CD8-positive, alpha-beta memory T cell (primary cell): ENCODE measurements at regions of chr6 and their contacts with region 1.

Region 1: DNA sequence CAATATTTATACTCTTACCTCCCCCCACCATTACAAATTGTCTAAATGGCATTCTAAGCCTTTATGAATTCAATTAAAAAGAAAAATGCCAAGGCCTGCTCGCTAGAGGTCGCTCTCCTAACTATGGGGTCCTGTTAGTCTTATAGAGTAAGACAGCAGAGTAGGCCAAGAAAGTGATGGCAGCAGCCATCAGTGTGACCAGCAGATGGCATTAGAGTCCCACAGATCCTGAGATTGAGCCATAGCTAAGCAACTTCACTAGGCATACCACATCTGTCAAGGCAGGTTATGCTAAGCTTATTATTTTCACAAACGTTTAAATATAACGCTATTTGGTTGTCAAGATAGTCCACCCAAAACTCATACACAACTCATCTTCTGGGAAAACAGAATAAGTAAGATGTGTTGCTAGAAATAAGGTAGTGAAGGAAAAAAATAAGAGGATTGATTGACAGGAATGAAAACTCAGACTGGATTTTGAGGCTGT is 57.6 kb upstream of the SCAF8 start:
- DNase-seq: peak; percentile 70 to 88 (median 81)
- H3K4me3 ChIP-seq: no peak overlapping the region
- H3K4me3 Mint-ChIP-seq: no peak overlapping the region
- H3K27ac ChIP-seq: no peak overlapping the region
- H3K27ac Mint-ChIP-seq: no peak overlapping the region
- H3K4me1 ChIP-seq: no peaks in the 10 kb centered on the region
- H3K4me1 Mint-ChIP-seq: no peaks in the 10 kb centered on the region
- H3K27me3 ChIP-seq: no peaks in the 10 kb centered on the region
- H3K27me3 Mint-ChIP-seq: no peaks in the 10 kb centered on the region

Region 2: DNA sequence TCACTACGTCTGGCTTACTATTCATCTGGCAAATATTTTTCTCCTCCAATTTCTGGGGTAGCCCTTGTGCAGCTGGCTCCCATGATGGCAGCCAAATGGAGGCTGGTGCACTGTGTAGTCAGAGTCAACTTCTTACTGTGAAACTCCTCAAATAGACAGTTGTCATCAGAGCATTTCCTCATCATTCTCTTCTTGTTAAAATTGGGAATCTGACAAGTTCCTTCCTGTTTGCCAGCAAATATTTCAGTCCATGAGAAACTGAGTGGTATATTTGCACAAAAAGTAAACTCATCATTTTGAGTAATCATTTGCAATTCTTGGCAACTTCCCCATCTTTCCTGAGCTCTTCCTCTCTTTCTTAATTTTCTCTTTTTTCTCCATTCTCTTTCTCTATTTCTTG is 1149.6 kb before region 1 on chr6:
- CTCF ChIA-PET with region 1: no interaction called
- POLR2A ChIA-PET with region 1: no interaction called
- DNase-seq: no peak
- H3K4me3 ChIP-seq: no peak overlapping the region
- H3K4me3 Mint-ChIP-seq: no peak overlapping the region
- H3K27ac ChIP-seq: no peak overlapping the region
- H3K27ac Mint-ChIP-seq: no peak overlapping the region
- H3K4me1 ChIP-seq: no peaks in the 10 kb centered on the region
- H3K4me1 Mint-ChIP-seq: no peaks in the 10 kb centered on the region
- H3K27me3 ChIP-seq: no peaks in the 10 kb centered on the region
- H3K27me3 Mint-ChIP-seq: no peaks in the 10 kb centered on the region

Region 3: GRCh38 chr6:154593122-154593521 is 82.5 kb before region 1 on chr6:
- CTCF ChIA-PET with region 1: no interaction called
- POLR2A ChIA-PET with region 1: no interaction called
- DNase-seq: no peak
- H3K4me3 ChIP-seq: no peak overlapping the region
- H3K4me3 Mint-ChIP-seq: no peak overlapping the region
- H3K27ac ChIP-seq: peak overlapping the region; percentile 31
- H3K27ac Mint-ChIP-seq: no peak overlapping the region
- H3K4me1 ChIP-seq: no peaks in the 10 kb centered on the region
- H3K4me1 Mint-ChIP-seq: no peaks in the 10 kb centered on the region
- H3K27me3 ChIP-seq: no peaks in the 10 kb centered on the region
- H3K27me3 Mint-ChIP-seq: peaks cover 0 to 3% of the 10 kb centered on the region in 2 donors

Region 4: GRCh38 chr6:154805288-154805911 is 129.8 kb after region 1 on chr6:
- CTCF ChIA-PET with region 1: interaction called, 112 read pairs
- POLR2A ChIA-PET with region 1: no interaction called
- DNase-seq: peak in 2 of 5 donors; percentile 33 to 45
- H3K4me3 ChIP-seq: no peak overlapping the region
- H3K4me3 Mint-ChIP-seq: no peak overlapping the region
- H3K27ac ChIP-seq: no peak overlapping the region
- H3K27ac Mint-ChIP-seq: peak overlapping the region in 4 of 8 donors; percentile 51 to 75 (median 60)
- H3K4me1 ChIP-seq: no peaks in the 10 kb centered on the region
- H3K4me1 Mint-ChIP-seq: peaks cover 3 to 10% (median 8%) of the 10 kb centered on the region in 3 donors
- H3K27me3 ChIP-seq: no peaks in the 10 kb centered on the region
- H3K27me3 Mint-ChIP-seq: no peaks in the 10 kb centered on the region

Region 5: GRCh38 chr6:154814063-154814462 is 138.4 kb after region 1 on chr6:
- CTCF ChIA-PET with region 1: interaction called, 12 read pairs
- POLR2A ChIA-PET with region 1: no interaction called
- DNase-seq: no peak
- H3K4me3 ChIP-seq: no peak overlapping the region
- H3K4me3 Mint-ChIP-seq: peak overlapping the region in 1 of 7 donors; percentile 43
- H3K27ac ChIP-seq: no peak overlapping the region
- H3K27ac Mint-ChIP-seq: peak overlapping the region in 1 of 8 donors; percentile 46
- H3K4me1 ChIP-seq: no peaks in the 10 kb centered on the region
- H3K4me1 Mint-ChIP-seq: peaks cover 5 to 14% (median 8%) of the 10 kb centered on the region in 3 donors
- H3K27me3 ChIP-seq: no peaks in the 10 kb centered on the region
- H3K27me3 Mint-ChIP-seq: no peaks in the 10 kb centered on the region

Region 6: GRCh38 chr6:155174576-155175211 is 499.0 kb after region 1 on chr6:
- CTCF ChIA-PET with region 1: interaction called, 22 read pairs
- POLR2A ChIA-PET with region 1: no interaction called
- DNase-seq: peak; percentile 27 to 75 (median 38)
- H3K4me3 ChIP-seq: no peak overlapping the region
- H3K4me3 Mint-ChIP-seq: peak overlapping the region in 1 of 7 donors; percentile 16
- H3K27ac ChIP-seq: no peak overlapping the region
- H3K27ac Mint-ChIP-seq: peak overlapping the region in 5 of 8 donors; percentile 1 to 61 (median 2)
- H3K4me1 ChIP-seq: peaks cover 16% of the 10 kb centered on the region
- H3K4me1 Mint-ChIP-seq: peaks cover 22 to 39% (median 39%) of the 10 kb centered on the region in 3 donors
- H3K27me3 ChIP-seq: no peaks in the 10 kb centered on the region
- H3K27me3 Mint-ChIP-seq: no peaks in the 10 kb centered on the region